AG04449 (cell line): ENCODE measurements at regions of chr10 and their contacts with region 1.

Region 1: DNA sequence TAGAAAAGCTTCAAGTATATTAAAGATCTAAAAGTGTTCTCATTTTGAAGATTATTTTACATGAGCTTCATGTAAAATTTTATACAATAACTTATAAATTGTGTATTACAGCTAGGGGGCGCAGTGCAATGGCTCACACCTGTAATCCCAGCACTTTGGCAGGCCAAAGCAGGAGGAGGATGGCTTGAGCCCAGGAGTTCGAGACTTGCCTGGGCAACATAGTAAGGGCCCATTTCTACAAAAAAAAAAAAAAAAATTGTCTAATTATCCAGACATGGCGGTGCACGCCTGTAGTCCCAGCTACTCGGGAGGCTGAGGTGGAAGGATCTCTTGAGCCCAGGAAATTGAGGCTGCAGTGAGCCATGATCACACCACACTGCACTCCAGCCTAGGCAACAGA is 16.6 kb downstream of the ACBD5 start:
- DNase-seq: no peak
- H3K4me3 ChIP-seq: no peak overlapping the region
- CTCF ChIP-seq: peak; percentile 55

Region 2: DNA sequence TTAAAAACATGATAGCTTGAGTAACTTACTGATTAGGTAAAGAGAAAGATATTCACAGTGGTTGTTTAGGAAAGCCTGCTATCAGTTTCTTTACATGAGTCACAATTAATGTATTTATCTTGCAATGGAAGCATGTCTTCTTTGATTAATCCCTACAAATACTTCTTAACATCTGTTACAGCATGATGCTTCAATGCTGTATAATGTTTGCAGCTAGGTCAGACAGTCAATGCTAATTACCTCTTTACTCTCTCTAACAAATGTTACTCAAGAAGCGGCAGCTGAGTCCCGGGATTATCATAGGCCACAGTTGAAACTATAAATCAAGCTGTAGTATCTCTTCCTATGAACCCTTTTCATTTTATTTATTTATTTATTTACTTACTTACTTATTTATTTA is 16.6 kb before region 1 on chr10:
- CTCF ChIA-PET with region 1: interaction called, 23 read pairs
- POLR2A ChIA-PET with region 1: no interaction called
- DNase-seq: peak; percentile 14
- H3K4me3 ChIP-seq: no peak overlapping the region
- CTCF ChIP-seq: no peak

Region 3: GRCh38 chr10:27235706-27236105 is 11.7 kb after region 1 on chr10:
- CTCF ChIA-PET with region 1: interaction called, 18 read pairs
- POLR2A ChIA-PET with region 1: no interaction called
- DNase-seq: no peak
- H3K4me3 ChIP-seq: no peak overlapping the region
- CTCF ChIP-seq: no peak

Region 4: DNA sequence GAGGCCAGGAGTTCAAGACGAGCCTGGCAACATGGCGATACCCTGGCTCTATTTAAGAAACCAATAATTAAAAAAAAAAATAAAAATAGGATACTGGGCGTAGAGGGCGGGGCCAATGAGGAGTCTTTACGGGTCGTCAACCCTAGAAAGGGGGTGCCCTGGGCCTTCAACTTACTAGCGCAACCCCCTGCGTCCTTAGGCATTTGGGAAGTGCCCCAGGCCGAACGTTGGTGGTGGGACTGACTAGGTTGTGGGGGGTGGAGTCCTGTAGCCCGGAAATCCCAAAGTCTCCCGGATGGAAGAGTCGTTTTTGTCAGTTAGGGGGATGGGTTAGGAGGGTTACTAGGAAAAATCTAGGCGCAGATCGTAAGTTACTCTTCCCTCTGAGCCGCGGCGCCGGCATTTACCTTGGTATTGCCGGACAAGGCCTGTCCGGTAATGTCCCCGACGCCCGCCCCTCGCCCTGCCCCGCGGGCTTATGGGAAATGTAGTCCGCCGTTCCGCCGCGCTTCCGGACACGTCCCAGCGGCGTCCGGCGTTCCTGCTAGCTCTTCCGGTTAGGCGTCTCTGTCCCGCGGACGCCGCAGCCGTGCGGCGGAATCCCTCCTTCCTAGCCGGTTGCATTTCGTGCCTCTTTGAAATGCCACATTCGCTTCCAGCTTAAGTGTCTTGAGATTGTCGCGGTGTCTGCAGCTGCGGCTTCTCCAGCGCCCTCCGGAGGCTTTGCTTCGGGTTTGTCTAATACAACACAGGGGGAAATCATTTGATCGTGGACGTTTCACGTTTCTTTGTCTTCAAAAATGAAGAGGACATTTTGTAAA is 17.9 kb after region 1 on chr10:
- CTCF ChIA-PET with region 1: interaction called, 18 read pairs
- POLR2A ChIA-PET with region 1: no interaction called
- DNase-seq: peak; percentile 66
- H3K4me3 ChIP-seq: peak overlapping the region; percentile 77
- CTCF ChIP-seq: peak; percentile 31

Region 5: GRCh38 chr10:27759483-27760272 is 535.7 kb after region 1 on chr10:
- CTCF ChIA-PET with region 1: no interaction called
- POLR2A ChIA-PET with region 1: no interaction called
- DNase-seq: no peak
- H3K4me3 ChIP-seq: no peak overlapping the region
- CTCF ChIP-seq: no peak